ENCODE measurements at regions of chr7 and their contacts with region 1.

Region 1: DNA sequence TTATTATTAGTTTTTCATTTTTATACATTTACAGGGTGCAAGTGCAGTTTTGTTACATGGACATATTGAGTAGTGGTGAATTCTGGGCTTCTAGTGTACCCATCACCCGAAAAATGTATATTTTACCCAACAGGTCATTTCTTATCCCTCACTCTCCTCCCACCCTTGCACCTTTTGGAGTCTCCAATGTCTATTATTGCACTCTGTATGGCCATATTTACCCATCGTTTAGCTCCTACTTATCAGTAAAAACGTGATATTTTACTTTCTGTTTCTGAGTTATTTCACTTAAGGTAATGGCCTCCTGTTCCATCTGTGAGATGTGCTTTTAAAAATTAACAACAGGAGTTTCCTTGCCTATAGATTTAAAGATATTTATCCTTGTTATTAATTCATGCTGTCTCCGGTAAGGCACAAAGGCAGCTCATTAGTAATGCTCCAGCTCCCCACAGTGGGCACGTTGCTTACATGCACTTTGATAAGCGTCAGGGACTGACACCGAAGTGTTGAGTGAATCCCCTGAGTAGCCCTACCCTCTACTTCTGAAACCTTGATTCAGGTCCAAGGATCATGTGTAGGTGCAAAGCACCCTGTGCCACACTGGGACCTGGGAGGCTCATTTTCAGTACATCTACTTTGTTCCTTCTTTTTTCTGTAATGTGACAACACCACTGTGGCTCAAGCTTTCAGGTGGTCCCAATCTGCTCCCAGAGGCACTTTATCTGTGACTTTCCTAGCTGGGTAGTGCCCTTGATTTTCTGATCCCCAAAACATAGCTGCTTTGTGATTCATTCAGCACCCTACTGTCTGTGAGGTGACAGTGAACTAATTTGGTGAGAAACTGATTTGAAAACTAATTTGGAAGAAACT is 27.3 kb downstream of the HYAL4 start:
- DNase-seq: peak; percentile 55
- ATAC-seq: peak; percentile 99
- H3K4me3 ChIP-seq: no peak overlapping the region
- H3K27ac ChIP-seq: no peak overlapping the region
- H3K4me1 ChIP-seq: no peaks in the 10 kb centered on the region
- H3K27me3 ChIP-seq: no peaks in the 10 kb centered on the region
- CTCF ChIP-seq: peak; percentile 82
- EP300 ChIP-seq: no peak
- POLR2A ChIP-seq: no peak
- RAD21 ChIP-seq: peak; percentile 53; the same call in 1 of the 2 replicates

Region 2: GRCh38 chr7:123494193-123494796 is 377.9 kb before region 1 on chr7:
- CTCF ChIA-PET with region 1: no interaction called
- POLR2A ChIA-PET with region 1: no interaction called
- in situ Hi-C with region 1: no loop called
- intact Hi-C with region 1: loop called (anchors 1 kb)
- DNase-seq: peak; percentile 27
- ATAC-seq: no peak
- H3K4me3 ChIP-seq: no peak overlapping the region
- H3K27ac ChIP-seq: no peak overlapping the region
- H3K4me1 ChIP-seq: no peaks in the 10 kb centered on the region
- H3K27me3 ChIP-seq: no peaks in the 10 kb centered on the region
- CTCF ChIP-seq: peak; percentile 56
- EP300 ChIP-seq: no peak
- POLR2A ChIP-seq: no peak
- RAD21 ChIP-seq: no peak

Region 3: GRCh38 chr7:123580406-123581161 is 291.6 kb before region 1 on chr7:
- CTCF ChIA-PET with region 1: interaction called, 5 read pairs
- POLR2A ChIA-PET with region 1: no interaction called
- in situ Hi-C with region 1: no loop called
- intact Hi-C with region 1: loop called (anchors 1 kb)
- DNase-seq: peak; percentile 46
- ATAC-seq: peak; percentile 96
- H3K4me3 ChIP-seq: no peak overlapping the region
- H3K27ac ChIP-seq: no peak overlapping the region
- H3K4me1 ChIP-seq: no peaks in the 10 kb centered on the region
- H3K27me3 ChIP-seq: no peaks in the 10 kb centered on the region
- CTCF ChIP-seq: peak; percentile 78
- EP300 ChIP-seq: no peak
- POLR2A ChIP-seq: no peak
- RAD21 ChIP-seq: 0 out of 2 replicates have a peak, but pooled peaks have one; percentile 23

Region 4: GRCh38 chr7:123635551-123636359 is 236.5 kb before region 1 on chr7:
- CTCF ChIA-PET with region 1: interaction called, 4 read pairs
- POLR2A ChIA-PET with region 1: no interaction called
- in situ Hi-C with region 1: loop called (anchors 10 kb)
- intact Hi-C with region 1: loop called (anchors 1 kb)
- DNase-seq: peak; percentile 5
- ATAC-seq: peak; percentile 60; the same call in 2 of the 3 replicates
- H3K4me3 ChIP-seq: no peak overlapping the region
- H3K27ac ChIP-seq: no peak overlapping the region
- H3K4me1 ChIP-seq: no peaks in the 10 kb centered on the region
- H3K27me3 ChIP-seq: no peaks in the 10 kb centered on the region
- CTCF ChIP-seq: peak; percentile 55
- EP300 ChIP-seq: no peak
- POLR2A ChIP-seq: no peak
- RAD21 ChIP-seq: no peak; the same call in 1 of the 2 replicates

Region 5: DNA sequence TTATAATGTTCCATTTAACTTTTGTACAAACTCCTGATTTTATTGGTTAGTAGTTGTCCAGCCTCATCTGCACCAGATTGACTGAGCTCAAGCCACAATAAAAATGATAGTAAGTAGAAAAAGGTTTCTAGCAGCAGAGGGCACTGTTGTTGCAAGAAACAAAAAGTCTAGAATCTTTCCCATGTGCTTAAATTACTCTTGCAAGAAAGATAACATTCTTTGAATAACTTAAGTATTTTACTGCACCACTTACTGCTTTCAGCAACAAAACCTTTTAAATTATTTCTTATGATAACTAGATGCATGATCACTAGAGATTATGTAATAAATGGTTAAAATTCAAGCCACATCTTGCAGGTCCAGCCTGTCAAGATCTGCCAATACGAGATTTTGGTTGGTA is 189.5 kb before region 1 on chr7:
- CTCF ChIA-PET with region 1: interaction called, 8 read pairs
- POLR2A ChIA-PET with region 1: no interaction called
- in situ Hi-C with region 1: no loop called
- intact Hi-C with region 1: loop called (anchors 2 kb)
- DNase-seq: peak; percentile 52
- ATAC-seq: peak; percentile 66
- H3K4me3 ChIP-seq: no peak overlapping the region
- H3K27ac ChIP-seq: no peak overlapping the region
- H3K4me1 ChIP-seq: 0 out of 2 replicates have a peak, but pooled peaks cover 8% of the 10 kb centered on the region
- H3K27me3 ChIP-seq: no peaks in the 10 kb centered on the region
- CTCF ChIP-seq: peak; percentile 62
- EP300 ChIP-seq: no peak
- POLR2A ChIP-seq: no peak
- RAD21 ChIP-seq: peak; percentile 52; the same call in 1 of the 2 replicates

Region 6: GRCh38 chr7:123811056-123811455 is 61.2 kb before region 1 on chr7:
- CTCF ChIA-PET with region 1: no interaction called
- POLR2A ChIA-PET with region 1: no interaction called
- in situ Hi-C with region 1: no loop called
- intact Hi-C with region 1: no loop called
- DNase-seq: no peak
- ATAC-seq: no peak
- H3K4me3 ChIP-seq: no peak overlapping the region
- H3K27ac ChIP-seq: no peak overlapping the region
- H3K4me1 ChIP-seq: no peaks in the 10 kb centered on the region
- H3K27me3 ChIP-seq: no peaks in the 10 kb centered on the region
- CTCF ChIP-seq: no peak
- EP300 ChIP-seq: no peak
- POLR2A ChIP-seq: no peak
- RAD21 ChIP-seq: no peak

Region 7: GRCh38 chr7:123901044-123901443 is 28.8 kb after region 1 on chr7:
- CTCF ChIA-PET with region 1: no interaction called
- POLR2A ChIA-PET with region 1: no interaction called
- in situ Hi-C with region 1: no loop called
- intact Hi-C with region 1: no loop called
- DNase-seq: no peak
- ATAC-seq: no peak
- H3K4me3 ChIP-seq: no peak overlapping the region
- H3K27ac ChIP-seq: no peak overlapping the region
- H3K4me1 ChIP-seq: no peaks in the 10 kb centered on the region
- H3K27me3 ChIP-seq: no peaks in the 10 kb centered on the region
- CTCF ChIP-seq: no peak
- EP300 ChIP-seq: no peak
- POLR2A ChIP-seq: no peak
- RAD21 ChIP-seq: no peak

Measured in HepG2 (cell line).